Calu3 (cell line): ENCODE measurements at regions of chr19 and their contacts with region 1.

Region 1: GRCh38 chr19:50705422-50706019 is 14.1 kb downstream of the SHANK1 start:
- DNase-seq: peak; percentile 68
- H3K4me3 Mint-ChIP-seq: no peak overlapping the region
- H3K27ac Mint-ChIP-seq: no peak overlapping the region
- H3K4me1 Mint-ChIP-seq: no peaks in the 10 kb centered on the region
- H3K27me3 Mint-ChIP-seq: peaks cover 91% of the 10 kb centered on the region
- CTCF ChIP-seq: peak; percentile 86

Region 2: DNA sequence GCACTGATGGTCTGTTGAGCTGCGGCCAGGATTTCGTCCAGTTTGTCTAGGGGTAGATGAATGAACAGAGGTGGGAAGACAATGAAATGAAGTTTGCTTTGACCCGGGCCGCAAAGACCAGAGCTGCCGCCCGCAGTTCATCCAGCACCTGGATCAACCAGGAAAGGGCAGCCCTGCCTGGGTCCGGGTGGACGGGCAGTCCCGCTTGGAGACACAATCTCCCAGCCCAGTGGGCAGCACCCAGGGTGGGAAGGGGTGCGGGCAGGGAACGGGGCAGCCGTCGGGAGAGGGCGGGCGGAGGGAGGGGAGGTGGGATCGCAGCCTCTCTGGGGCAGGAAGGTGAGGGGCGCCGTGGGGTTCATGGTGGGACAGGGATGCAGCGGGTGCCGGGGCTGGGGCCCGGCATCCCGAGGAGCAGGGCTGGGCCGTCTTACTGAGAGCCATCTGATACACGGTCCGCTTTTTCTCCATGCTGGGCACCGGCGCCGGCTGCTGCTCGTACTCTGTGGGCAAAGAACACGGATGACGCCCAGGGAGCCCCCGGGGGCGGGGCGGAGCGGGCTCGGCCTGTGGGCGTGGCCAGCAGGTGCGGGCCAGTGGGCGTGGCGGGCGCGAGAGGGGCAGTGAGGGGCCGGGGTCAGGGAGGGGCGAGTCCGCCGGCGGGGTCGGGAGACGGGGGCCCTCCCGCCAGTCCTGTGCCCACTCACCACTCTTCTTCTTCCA is 19.1 kb before region 1 on chr19:
- CTCF ChIA-PET with region 1: no interaction called
- intact Hi-C with region 1: no loop called
- DNase-seq: no peak
- H3K4me3 Mint-ChIP-seq: no peak overlapping the region
- H3K27ac Mint-ChIP-seq: no peak overlapping the region
- H3K4me1 Mint-ChIP-seq: no peaks in the 10 kb centered on the region
- H3K27me3 Mint-ChIP-seq: peaks cover 100% of the 10 kb centered on the region
- CTCF ChIP-seq: no peak

Region 3: GRCh38 chr19:50724522-50725217 is 19.1 kb after region 1 on chr19:
- CTCF ChIA-PET with region 1: interaction called, 20 read pairs
- intact Hi-C with region 1: no loop called
- DNase-seq: peak; percentile 100
- H3K4me3 Mint-ChIP-seq: peak overlapping the region; percentile 94
- H3K27ac Mint-ChIP-seq: peak overlapping the region; percentile 78
- H3K4me1 Mint-ChIP-seq: no peaks in the 10 kb centered on the region
- H3K27me3 Mint-ChIP-seq: peaks cover 63% of the 10 kb centered on the region
- CTCF ChIP-seq: peak; percentile 88

Region 4: GRCh38 chr19:50777754-50778303 is 72.3 kb after region 1 on chr19:
- CTCF ChIA-PET with region 1: interaction called, 25 read pairs
- intact Hi-C with region 1: loop called (anchors 1 kb)
- DNase-seq: no peak
- H3K4me3 Mint-ChIP-seq: no peak overlapping the region
- H3K27ac Mint-ChIP-seq: no peak overlapping the region
- H3K4me1 Mint-ChIP-seq: peaks cover 19% of the 10 kb centered on the region
- H3K27me3 Mint-ChIP-seq: peaks cover 99% of the 10 kb centered on the region
- CTCF ChIP-seq: no peak

Region 5: GRCh38 chr19:50922317-50922853 is 216.9 kb after region 1 on chr19:
- CTCF ChIA-PET with region 1: interaction called, 7 read pairs
- intact Hi-C with region 1: loop called (anchors 1 kb)
- DNase-seq: peak; percentile 91
- H3K4me3 Mint-ChIP-seq: no peak overlapping the region
- H3K27ac Mint-ChIP-seq: peak overlapping the region; percentile 10
- H3K4me1 Mint-ChIP-seq: peaks cover 21% of the 10 kb centered on the region
- H3K27me3 Mint-ChIP-seq: peaks cover 28% of the 10 kb centered on the region
- CTCF ChIP-seq: peak; percentile 94